MCF 10A (cell line): ENCODE measurements at regions of chr19 and their contacts with region 1.

Region 1: GRCh38 chr19:19531951-19532805 is 3.5 kb downstream of the YJEFN3 start:
- DNase-seq: peak; percentile 80
- H3K4me3 Mint-ChIP-seq: no peak overlapping the region
- H3K27ac Mint-ChIP-seq: no peak overlapping the region
- H3K4me1 Mint-ChIP-seq: peaks cover 11% of the 10 kb centered on the region
- H3K27me3 Mint-ChIP-seq: no peaks in the 10 kb centered on the region
- CTCF ChIP-seq: peak; percentile 89

Region 2: GRCh38 chr19:19280561-19280960 is 251.6 kb before region 1 on chr19:
- CTCF ChIA-PET with region 1: no interaction called
- POLR2A ChIA-PET with region 1: no interaction called
- intact Hi-C with region 1: no loop called
- DNase-seq: no peak
- H3K4me3 Mint-ChIP-seq: no peak overlapping the region
- H3K27ac Mint-ChIP-seq: no peak overlapping the region
- H3K4me1 Mint-ChIP-seq: no peaks in the 10 kb centered on the region
- H3K27me3 Mint-ChIP-seq: no peaks in the 10 kb centered on the region
- CTCF ChIP-seq: no peak

Region 3: DNA sequence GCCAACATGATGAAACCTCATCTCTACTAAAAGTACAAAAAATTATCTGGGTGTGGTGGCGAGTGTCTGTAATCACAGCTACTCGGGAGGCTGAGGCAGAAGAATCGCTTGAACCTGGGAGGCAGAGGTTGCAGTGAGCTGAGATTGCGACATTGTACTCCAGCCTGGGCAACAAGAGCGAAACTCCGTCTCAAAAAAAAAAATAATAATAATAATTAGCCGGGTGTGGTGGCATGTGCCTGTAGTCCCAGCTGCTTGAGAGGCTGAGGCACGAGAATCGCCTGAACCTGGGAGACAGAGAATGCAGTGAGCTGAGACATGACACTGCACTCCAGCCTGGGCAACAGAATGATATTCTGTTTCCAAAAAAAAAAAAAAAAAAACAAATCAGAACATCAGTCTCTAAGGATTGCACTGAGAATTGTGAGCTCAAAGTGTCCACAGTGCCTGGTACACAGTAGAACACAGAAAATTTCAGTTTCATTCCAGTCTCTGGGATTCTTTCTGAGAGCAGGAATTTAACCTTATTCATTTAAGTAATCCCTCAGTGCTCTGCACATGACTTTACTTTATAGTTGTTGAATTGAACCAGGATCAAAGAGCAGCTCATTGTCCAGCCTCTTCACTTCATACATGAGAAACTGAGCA is 152.8 kb before region 1 on chr19:
- CTCF ChIA-PET with region 1: no interaction called
- POLR2A ChIA-PET with region 1: no interaction called
- intact Hi-C with region 1: no loop called
- DNase-seq: no peak
- H3K4me3 Mint-ChIP-seq: no peak overlapping the region
- H3K27ac Mint-ChIP-seq: no peak overlapping the region
- H3K4me1 Mint-ChIP-seq: peaks cover 8% of the 10 kb centered on the region
- H3K27me3 Mint-ChIP-seq: no peaks in the 10 kb centered on the region
- CTCF ChIP-seq: no peak

Region 4: DNA sequence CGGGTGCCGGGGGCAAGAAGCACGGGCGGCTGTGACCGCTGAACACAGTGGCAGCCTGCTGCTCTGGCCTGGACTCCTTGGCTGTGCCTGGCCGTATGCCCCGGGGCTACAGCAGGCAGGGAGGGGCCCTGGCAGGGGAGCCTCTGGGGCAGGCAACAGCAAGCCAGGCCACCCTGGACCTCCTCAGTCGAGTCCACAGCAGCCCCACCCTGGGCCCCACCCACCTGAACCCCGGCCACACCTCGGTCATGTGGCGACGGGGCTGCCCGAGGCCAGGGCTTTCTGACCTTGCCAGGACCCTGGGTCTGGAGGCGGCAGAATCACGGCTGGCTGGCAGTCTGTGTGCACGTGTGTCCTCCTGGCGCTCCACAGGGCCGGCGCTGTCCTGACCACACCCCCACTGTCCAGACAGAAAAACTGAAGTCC is 14.6 kb after region 1 on chr19:
- CTCF ChIA-PET with region 1: interaction called, 13 read pairs
- POLR2A ChIA-PET with region 1: no interaction called
- intact Hi-C with region 1: no loop called
- DNase-seq: no peak
- H3K4me3 Mint-ChIP-seq: no peak overlapping the region
- H3K27ac Mint-ChIP-seq: no peak overlapping the region
- H3K4me1 Mint-ChIP-seq: peaks cover 6% of the 10 kb centered on the region
- H3K27me3 Mint-ChIP-seq: no peaks in the 10 kb centered on the region
- CTCF ChIP-seq: no peak

Region 5: GRCh38 chr19:19568802-19569756 is 36.9 kb after region 1 on chr19:
- CTCF ChIA-PET with region 1: interaction called, 12 read pairs
- POLR2A ChIA-PET with region 1: interaction called, 4 read pairs
- intact Hi-C with region 1: no loop called
- DNase-seq: peak; percentile 33
- H3K4me3 Mint-ChIP-seq: no peak overlapping the region
- H3K27ac Mint-ChIP-seq: no peak overlapping the region
- H3K4me1 Mint-ChIP-seq: no peaks in the 10 kb centered on the region
- H3K27me3 Mint-ChIP-seq: no peaks in the 10 kb centered on the region
- CTCF ChIP-seq: no peak

Region 6: GRCh38 chr19:19581391-19581790 is 49.2 kb after region 1 on chr19:
- CTCF ChIA-PET with region 1: no interaction called
- POLR2A ChIA-PET with region 1: no interaction called
- intact Hi-C with region 1: no loop called
- DNase-seq: no peak
- H3K4me3 Mint-ChIP-seq: no peak overlapping the region
- H3K27ac Mint-ChIP-seq: no peak overlapping the region
- H3K4me1 Mint-ChIP-seq: no peaks in the 10 kb centered on the region
- H3K27me3 Mint-ChIP-seq: no peaks in the 10 kb centered on the region
- CTCF ChIP-seq: no peak

Region 7: GRCh38 chr19:19637523-19638251 is 105.5 kb after region 1 on chr19:
- CTCF ChIA-PET with region 1: interaction called, 21 read pairs
- POLR2A ChIA-PET with region 1: no interaction called
- intact Hi-C with region 1: no loop called
- DNase-seq: no peak
- H3K4me3 Mint-ChIP-seq: no peak overlapping the region
- H3K27ac Mint-ChIP-seq: no peak overlapping the region
- H3K4me1 Mint-ChIP-seq: peaks cover 8% of the 10 kb centered on the region
- H3K27me3 Mint-ChIP-seq: no peaks in the 10 kb centered on the region
- CTCF ChIP-seq: no peak

Region 8: DNA sequence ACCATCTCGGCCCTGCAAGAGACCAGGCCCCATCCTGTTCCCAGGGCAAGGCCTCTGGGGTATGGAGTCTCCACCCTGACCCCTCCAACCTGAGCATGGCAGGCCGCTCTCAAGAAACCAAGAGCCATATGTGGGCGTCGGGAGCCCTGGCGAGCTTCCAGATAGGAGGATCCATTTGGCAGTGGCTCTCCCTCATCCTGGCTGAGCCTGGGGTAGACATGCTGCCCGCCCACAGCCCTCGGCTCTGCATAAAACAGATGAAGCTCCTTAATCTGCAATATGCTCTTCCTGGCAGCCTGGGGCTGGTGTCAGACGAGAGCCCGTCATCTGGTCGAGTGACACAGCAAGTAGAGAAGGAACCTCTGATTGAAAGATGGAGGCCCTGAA is 125.2 kb after region 1 on chr19:
- CTCF ChIA-PET with region 1: interaction called, 55 read pairs
- POLR2A ChIA-PET with region 1: no interaction called
- intact Hi-C with region 1: no loop called
- DNase-seq: no peak
- H3K4me3 Mint-ChIP-seq: no peak overlapping the region
- H3K27ac Mint-ChIP-seq: no peak overlapping the region
- H3K4me1 Mint-ChIP-seq: peaks cover 14% of the 10 kb centered on the region
- H3K27me3 Mint-ChIP-seq: no peaks in the 10 kb centered on the region
- CTCF ChIP-seq: no peak

Region 9: DNA sequence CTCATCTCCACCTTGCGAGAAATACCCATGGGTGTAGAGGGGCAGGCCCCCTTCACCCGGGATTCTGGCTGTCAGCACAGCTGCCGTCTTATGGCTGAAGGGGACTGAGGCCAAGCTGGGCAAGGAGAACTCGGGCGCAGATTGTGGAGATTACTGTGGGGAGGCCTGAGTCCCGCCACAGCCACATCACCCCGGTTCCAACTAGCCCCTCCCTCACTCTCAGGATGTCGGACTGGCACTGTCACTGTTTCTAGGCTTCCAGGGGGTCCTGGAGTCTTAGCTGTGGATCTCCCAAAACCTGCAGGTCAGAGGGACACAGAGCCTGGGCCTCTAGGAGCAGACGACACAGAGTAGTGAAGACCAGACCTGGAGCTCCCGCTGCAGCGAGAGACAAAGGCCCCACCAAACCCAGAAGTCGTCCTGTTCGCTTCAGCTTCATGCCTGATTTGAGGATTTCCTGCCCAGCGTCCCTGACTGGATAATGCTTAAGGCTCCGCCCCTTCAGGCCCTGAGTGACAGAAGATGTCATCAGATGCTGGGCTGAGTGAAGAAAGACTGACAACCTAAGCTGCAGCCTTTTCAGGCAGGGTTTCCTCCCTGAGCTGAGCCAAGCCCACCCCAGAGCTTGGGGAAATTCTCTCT is 424.4 kb after region 1 on chr19:
- CTCF ChIA-PET with region 1: interaction called, 3 read pairs
- POLR2A ChIA-PET with region 1: no interaction called
- intact Hi-C with region 1: loop called (anchors 5 kb)
- DNase-seq: no peak
- H3K4me3 Mint-ChIP-seq: no peak overlapping the region
- H3K27ac Mint-ChIP-seq: no peak overlapping the region
- H3K4me1 Mint-ChIP-seq: no peaks in the 10 kb centered on the region
- H3K27me3 Mint-ChIP-seq: no peaks in the 10 kb centered on the region
- CTCF ChIP-seq: no peak